ENCODE measurements at regions of chr2 and their contacts with region 1.

Region 1: DNA sequence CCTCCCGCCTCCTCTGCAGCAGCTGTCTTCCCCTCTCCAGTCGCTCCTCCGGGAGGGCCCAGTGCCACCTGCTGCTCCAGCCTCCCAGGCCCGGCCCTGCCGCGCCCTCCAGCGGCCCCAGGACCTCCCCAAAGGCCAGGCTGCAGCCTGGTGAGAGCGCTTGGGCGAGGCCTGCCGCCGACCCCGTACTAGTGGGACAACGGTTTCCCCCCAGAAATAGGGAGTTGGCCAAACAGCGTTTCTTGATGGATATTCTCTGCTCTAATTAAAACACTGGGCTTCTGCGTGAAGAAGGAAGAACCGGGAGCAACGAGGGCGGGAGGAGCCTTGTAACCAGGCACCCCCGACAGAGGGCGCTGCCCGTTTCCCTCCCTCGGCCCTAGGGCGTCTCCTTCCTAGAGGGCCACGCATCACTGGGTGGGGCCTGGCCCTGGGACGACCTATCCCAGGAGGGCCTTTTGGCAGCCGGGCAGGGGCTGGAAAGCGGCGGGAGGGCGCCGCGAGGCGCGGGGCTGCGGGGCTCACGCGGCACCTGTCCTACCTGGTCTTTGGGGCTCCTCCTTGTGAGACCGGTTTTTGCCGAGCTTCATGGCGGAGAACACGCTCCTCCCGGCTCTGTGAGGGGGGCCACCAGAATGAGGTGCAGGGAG is 25.4 kb upstream of the OTOF start:
- DNase-seq: peak; percentile 89

Region 2: GRCh38 chr2:26577434-26578112 is 74.2 kb after region 1 on chr2:
- intact Hi-C with region 1: loop called (anchors 5 kb)
- DNase-seq: no peak

Region 3: DNA sequence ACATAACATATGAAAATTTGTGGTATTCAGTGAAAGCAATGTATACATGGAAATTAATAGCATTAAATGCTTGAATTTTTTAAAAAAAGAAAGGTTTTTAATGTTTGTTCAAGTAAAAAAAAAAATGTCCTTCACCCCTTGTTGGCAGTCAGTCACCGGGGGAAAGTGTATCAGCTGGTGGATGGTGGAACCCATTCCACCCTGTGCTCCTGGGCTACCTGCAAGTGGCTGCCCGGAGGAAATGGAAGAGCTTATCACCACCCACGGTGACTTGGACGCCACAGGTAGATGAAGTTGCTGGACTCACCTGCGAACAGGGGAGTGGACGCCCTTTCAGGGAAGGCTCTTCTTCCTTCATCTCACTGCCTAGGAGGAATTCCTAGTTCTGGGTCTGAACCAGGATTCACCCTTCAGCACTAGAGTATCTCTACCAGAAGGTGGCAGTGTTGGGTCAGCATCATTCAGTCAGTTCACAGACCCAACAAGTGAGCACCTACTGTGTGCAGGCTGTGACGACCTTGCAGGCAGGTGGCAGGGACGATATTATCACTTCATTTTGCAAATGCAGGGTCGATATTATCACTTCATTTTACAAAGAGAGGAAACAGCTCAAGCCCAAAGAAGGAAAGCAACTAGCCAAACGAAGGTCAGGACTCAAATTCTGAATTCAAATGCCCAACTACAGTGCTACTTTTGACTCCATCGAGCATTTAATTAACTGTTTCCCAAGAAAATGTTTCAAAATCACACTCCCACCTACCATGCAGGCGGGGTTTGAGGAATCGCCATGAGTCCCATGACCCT is 102.0 kb after region 1 on chr2:
- intact Hi-C with region 1: no loop called
- DNase-seq: no peak

Region 4: DNA sequence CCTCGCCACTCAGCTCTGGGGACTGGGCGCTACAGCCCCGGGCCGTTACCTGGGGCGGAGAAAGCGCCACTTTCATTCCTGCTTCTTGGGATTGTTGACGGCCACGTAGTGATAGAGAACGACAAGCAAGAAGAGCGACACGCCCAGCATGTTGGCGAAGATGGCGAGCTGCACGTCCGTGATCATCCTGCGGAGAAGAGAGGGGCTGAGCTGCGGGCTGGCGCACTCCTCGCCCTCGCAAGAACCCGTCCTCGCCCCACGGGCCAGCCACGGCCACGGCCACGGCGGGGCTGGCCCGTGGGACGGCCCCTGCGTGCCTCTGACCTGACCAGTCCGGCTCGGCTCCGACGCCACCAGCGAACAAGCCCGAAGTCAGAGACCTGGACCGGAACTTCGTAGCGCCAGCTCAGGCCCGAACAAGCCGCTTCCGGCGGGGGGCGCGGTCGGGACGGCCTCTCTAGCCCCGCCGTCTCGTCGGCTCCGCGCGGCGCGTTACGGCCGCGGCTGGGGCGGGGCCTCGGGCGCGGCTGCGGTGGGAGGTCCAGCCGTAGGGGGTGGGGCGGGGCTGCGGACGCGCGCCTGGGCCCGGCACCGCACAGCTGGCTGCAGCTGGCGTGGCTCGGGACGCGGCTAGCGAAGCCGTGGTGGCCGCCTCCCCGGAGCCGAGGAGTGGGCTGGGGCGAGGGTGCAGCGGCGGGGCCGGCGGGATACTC is 568.1 kb after region 1 on chr2 and contains the start of gene OST4:
- intact Hi-C with region 1: no loop called
- DNase-seq: peak; percentile 98
- total RNA-seq, gene OST4: 339 TPM

Measured in cardiac septum (tissue), 1 donor.